ENCODE measurements at regions of chr7 and their contacts with region 1.

Region 1: GRCh38 chr7:74993121-74993520 is 28.6 kb downstream of the CASTOR2 start:
- DNase-seq: no peak
- H3K4me3 ChIP-seq: no peak overlapping the region
- H3K27ac ChIP-seq: no peak overlapping the region
- H3K4me1 ChIP-seq: peaks cover 2% of the 10 kb centered on the region
- H3K27me3 ChIP-seq: no peaks in the 10 kb centered on the region
- CTCF ChIP-seq: no peak
- POLR2A ChIP-seq: no peak

Region 2: DNA sequence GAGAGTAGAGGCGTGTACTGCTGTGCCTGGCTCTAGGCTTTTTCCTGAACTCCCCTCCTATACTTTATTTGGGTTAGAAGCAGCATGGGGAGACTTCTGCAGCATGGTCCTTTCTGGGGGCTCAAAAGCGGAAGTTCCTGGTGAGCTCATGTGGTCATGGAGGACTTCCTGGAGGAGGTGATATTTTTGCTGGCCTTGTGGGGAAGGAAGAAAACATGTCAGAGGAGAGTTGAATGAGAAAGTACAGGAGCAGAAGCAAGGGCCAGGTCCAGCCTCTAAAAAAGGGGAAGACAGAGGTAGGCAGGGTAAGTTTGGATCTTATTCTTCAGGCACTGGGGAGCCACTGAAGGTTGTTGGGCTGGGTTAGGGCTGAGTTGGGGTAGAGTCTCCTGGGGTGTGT is 16.9 kb after region 1 on chr7:
- CTCF ChIA-PET with region 1: no interaction called
- POLR2A ChIA-PET with region 1: no interaction called
- dilution Hi-C with region 1: no loop called
- intact Hi-C with region 1: no loop called
- DNase-seq: no peak
- H3K4me3 ChIP-seq: no peak overlapping the region
- H3K27ac ChIP-seq: no peak overlapping the region
- H3K4me1 ChIP-seq: no peaks in the 10 kb centered on the region
- H3K27me3 ChIP-seq: no peaks in the 10 kb centered on the region
- CTCF ChIP-seq: no peak
- POLR2A ChIP-seq: no peak

Region 3: GRCh38 chr7:75072978-75073282 is 79.8 kb after region 1 on chr7:
- CTCF ChIA-PET with region 1: no interaction called
- POLR2A ChIA-PET with region 1: no interaction called
- dilution Hi-C with region 1: no loop called
- intact Hi-C with region 1: loop called (anchors 2 kb)
- DNase-seq: peak; percentile 61
- H3K4me3 ChIP-seq: peak overlapping the region; percentile 21 to 70 (median 62)
- H3K27ac ChIP-seq: peak overlapping the region; percentile 51
- H3K4me1 ChIP-seq: peaks cover 5% of the 10 kb centered on the region
- H3K27me3 ChIP-seq: no peaks in the 10 kb centered on the region
- CTCF ChIP-seq: no peak
- POLR2A ChIP-seq: no peak

Measured in endothelial cell of umbilical vein (primary cell).